Heart left ventricle (tissue), 16 donors: ENCODE measurements at regions of chr1 and their contacts with region 1.

Region 1: GRCh38 chr1:116474921-116475849 is 95.6 kb downstream of the CD58 start:
- DNase-seq: peak; percentile 56 to 86 (median 70)
- ATAC-seq: peak; percentile 69 to 87 (median 86)
- H3K4me3 ChIP-seq: no peak overlapping the region
- H3K27ac ChIP-seq: peak overlapping the region; percentile 75 to 96 (median 90)
- H3K4me1 ChIP-seq: peaks cover 0 to 40% (median 23%) of the 10 kb centered on the region in 12 donors
- H3K27me3 ChIP-seq: no peaks in the 10 kb centered on the region
- CTCF ChIP-seq: no peak
- POLR2A ChIP-seq: no peak

Region 2: DNA sequence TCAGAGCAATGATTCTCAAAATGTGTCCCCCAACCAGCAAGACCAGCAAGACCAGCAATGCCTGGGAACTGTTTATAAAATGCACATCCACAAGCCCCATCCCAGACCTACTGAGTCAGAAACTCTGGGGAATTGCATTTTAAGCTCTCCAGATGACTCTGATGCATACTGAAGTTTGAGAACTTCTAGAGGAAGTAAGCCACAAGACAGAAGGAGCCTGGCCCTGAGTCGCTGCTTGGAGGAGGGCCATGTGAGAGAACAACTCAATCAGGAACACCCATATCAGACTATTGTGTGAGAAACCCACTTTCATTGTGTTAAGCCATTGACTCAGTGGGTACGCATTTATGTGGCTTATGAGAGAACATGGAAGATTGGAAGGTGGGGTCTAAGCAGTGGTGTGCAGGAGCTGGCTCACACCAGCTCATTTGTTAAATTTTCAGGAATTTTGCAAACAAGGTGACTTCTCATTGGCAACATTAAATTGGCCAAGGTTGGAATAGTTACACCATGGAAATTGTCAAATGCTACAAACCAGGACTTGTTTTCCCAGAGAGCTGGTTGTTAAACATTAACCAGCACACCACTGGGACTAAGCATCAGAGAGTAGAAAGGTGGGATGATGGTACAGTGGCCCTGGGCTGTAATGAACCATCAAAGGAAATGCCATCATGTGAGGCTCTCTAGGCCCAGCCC is 63.3 kb before region 1 on chr1:
- intact Hi-C with region 1: loop called in 4 of 10 experiments (anchors 2 to 5 kb)
- DNase-seq: no peak
- ATAC-seq: no peak
- H3K4me3 ChIP-seq: no peak overlapping the region
- H3K27ac ChIP-seq: peak overlapping the region in 6 of 12 donors; percentile 21 to 89 (median 64)
- H3K4me1 ChIP-seq: peaks cover 0 to 63% (median 20%) of the 10 kb centered on the region in 12 donors
- H3K27me3 ChIP-seq: no peaks in the 10 kb centered on the region
- CTCF ChIP-seq: no peak
- POLR2A ChIP-seq: no peak

Region 3: DNA sequence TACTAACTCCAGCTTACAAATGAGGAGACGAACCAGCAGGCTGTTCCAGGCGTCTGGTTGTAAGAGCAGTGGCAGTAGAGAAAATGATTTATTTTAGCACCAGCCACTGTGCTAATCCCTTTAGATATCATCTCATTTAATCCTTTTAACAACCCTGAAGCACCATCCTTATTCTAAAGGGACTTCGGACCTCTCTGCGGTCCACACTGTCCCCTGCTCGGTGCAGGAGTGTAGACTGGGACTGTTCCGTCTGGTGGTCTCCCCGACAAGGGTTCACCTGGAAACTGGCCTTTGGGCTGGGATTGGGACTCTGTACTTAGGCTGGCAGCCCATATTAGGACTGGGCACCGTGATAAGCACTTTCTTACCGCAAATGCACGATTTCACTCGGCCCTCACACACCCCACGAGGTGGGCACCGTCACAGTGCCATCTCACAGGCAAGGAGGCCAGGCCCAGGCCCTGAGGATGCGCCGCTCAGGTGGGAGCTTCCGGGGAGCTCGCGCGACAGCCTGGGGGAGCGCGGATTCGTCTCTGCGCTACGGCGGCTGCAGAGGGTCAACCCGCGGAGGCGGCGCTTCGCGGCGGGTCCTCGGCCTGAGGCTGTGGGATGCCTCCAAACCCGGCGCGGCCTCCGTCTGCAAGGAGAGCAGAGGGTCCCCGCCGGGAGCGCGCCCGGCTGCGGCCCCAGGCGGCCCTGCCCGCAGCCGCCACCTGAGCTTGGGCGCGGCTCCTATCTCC is 56.9 kb before region 1 on chr1:
- intact Hi-C with region 1: loop called in 5 of 10 experiments (anchors 2 to 5 kb)
- DNase-seq: peak; percentile 85 to 93 (median 88)
- ATAC-seq: peak; percentile 24 to 79 (median 72)
- H3K4me3 ChIP-seq: peak overlapping the region; percentile 65 to 88 (median 78)
- H3K27ac ChIP-seq: peak overlapping the region; percentile 63 to 95 (median 84)
- H3K4me1 ChIP-seq: peaks cover 4 to 44% (median 22%) of the 10 kb centered on the region in 12 donors
- H3K27me3 ChIP-seq: no peaks in the 10 kb centered on the region
- CTCF ChIP-seq: peak in 1 of 12 donors; percentile 32
- POLR2A ChIP-seq: peak in 1 of 2 donors; percentile 51

Region 4: GRCh38 chr1:116426401-116426800 is 48.8 kb before region 1 on chr1:
- intact Hi-C with region 1: loop called in 5 of 10 experiments (anchors 5 kb)
- DNase-seq: no peak
- ATAC-seq: no peak
- H3K4me3 ChIP-seq: no peak overlapping the region
- H3K27ac ChIP-seq: no peak overlapping the region
- H3K4me1 ChIP-seq: peaks cover 0 to 20% (median 4%) of the 10 kb centered on the region in 12 donors
- H3K27me3 ChIP-seq: no peaks in the 10 kb centered on the region
- CTCF ChIP-seq: no peak
- POLR2A ChIP-seq: no peak

Region 5: GRCh38 chr1:116433275-116434257 is 41.6 kb before region 1 on chr1:
- intact Hi-C with region 1: loop called in 6 of 10 experiments (anchors 2 to 5 kb)
- DNase-seq: peak; percentile 67 to 86 (median 68)
- ATAC-seq: peak; percentile 88 to 95 (median 91)
- H3K4me3 ChIP-seq: no peak overlapping the region
- H3K27ac ChIP-seq: peak overlapping the region; percentile 41 to 91 (median 78)
- H3K4me1 ChIP-seq: peaks cover 0 to 34% (median 7%) of the 10 kb centered on the region in 12 donors
- H3K27me3 ChIP-seq: no peaks in the 10 kb centered on the region
- CTCF ChIP-seq: no peak
- POLR2A ChIP-seq: peak in 1 of 2 donors; percentile 11

Region 6: GRCh38 chr1:116457946-116458604 is 17.1 kb before region 1 on chr1:
- intact Hi-C with region 1: no loop called
- DNase-seq: peak in 3 of 5 donors; percentile 50 to 72 (median 70)
- ATAC-seq: peak; percentile 25 to 87 (median 82)
- H3K4me3 ChIP-seq: no peak overlapping the region
- H3K27ac ChIP-seq: peak overlapping the region in 1 of 12 donors; percentile 31
- H3K4me1 ChIP-seq: peaks cover 0 to 6% (median 0%) of the 10 kb centered on the region in 12 donors
- H3K27me3 ChIP-seq: no peaks in the 10 kb centered on the region
- CTCF ChIP-seq: no peak
- POLR2A ChIP-seq: no peak